Aorta (tissue), 5 donors: ENCODE measurements at regions of chr7 and their contacts with region 1.

Region 1: DNA sequence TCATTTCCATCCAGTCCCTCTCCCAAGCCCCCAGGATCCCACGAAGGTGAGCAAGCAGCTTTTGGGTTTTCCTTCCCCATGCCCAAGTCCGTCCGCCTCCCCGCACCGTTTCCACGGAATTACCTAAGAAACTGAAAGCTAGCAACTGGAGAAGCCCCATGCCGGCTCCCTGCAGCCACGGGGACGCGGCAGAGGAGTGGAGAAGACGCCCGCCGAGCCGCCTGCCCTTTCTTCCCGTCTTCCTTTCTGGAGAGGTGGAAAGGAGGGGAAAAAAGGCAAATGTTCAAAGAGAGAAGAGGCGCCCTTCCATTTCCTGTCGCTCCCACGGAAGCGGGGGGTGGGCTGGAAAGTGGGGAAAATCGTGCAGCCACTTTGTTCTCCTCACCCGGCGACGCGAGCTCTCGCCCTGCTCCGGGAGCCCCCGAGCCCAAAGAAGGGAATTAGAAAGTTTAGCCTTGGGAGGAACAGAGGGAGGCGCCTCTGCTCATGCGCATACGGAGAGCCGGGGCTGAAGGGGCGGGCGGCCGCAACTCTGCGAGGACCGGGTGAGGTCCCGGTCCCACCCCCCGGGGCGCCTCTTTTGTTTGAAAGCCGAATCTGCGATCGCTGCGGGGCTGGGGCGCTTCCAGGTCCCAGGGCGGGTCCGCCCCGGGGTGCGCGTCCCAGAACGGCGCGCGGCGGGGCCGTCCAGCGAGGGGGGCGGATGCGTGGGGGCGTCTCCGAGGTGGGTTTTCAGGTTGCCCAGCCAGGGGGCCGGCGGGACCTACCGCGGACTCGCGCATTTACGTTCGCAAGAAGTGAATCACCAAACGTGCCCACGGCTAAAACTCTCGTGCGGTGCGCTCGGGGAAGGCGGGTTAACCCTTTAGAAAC is at the start of gene LAMB1:
- DNase-seq: peak; percentile 77 to 89
- ATAC-seq: peak; percentile 75
- H3K4me3 ChIP-seq: peak within 1 kb of the TSS; percentile 54 to 81
- H3K27ac ChIP-seq: peak within 1 kb of the TSS in 1 of 2 donors; percentile 45
- H3K4me1 ChIP-seq: no peaks in the 10 kb centered on the region
- H3K27me3 ChIP-seq: no peaks in the 10 kb centered on the region
- total RNA-seq, gene LAMB1: 120 to 196 TPM

Region 2: GRCh38 chr7:107743567-107744344 is 259.2 kb before region 1 on chr7 and contains the start of gene CBLL1:
- intact Hi-C with region 1: no loop called
- DNase-seq: peak; percentile 98 to 99
- ATAC-seq: peak; percentile 100
- H3K4me3 ChIP-seq: peak within 1 kb of the TSS; percentile 57 to 81
- H3K27ac ChIP-seq: peak within 1 kb of the TSS; percentile 80 to 87
- H3K4me1 ChIP-seq: peaks cover 2 to 7% of the 10 kb centered on the region in 2 donors
- H3K27me3 ChIP-seq: no peaks in the 10 kb centered on the region
- total RNA-seq, gene CBLL1: 20.4 to 23.4 TPM

Region 3: DNA sequence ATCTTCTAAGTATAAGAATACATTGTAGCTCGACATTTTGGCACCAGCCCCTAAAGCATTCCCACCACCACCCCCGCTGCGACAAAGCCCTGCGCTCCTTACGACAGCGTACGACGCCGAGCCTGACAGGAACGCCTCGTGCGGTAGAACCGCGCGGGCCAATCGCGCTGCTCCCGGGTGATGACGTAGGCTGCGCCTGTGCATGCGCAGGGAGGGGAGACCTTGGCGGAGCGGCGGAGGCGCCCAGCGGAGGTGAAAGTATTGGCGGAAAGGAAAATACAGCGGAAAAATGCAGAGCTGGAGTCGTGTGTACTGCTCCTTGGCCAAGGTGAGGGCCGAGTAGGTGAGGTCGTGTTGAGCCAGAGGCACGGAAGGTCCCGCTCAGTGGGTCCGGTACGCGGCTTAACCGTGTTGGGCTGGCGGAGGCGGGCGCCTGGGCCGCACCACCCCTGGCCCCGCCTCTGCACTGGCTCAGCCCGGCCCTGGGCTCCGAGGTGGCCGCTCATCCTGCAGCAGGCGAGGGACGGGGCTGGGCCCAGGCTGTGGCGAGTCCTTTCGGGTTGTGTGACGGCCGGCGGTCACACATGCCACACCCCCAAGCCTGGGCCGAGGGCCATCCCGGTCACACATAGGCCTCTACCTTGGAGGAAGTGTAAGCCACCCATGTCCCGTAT is 111.9 kb before region 1 on chr7 and contains the start of gene DLD:
- intact Hi-C with region 1: loop called in 1 of 2 experiments (anchors 5 kb)
- DNase-seq: peak; percentile 97 to 99
- ATAC-seq: peak; percentile 100
- H3K4me3 ChIP-seq: peak within 1 kb of the TSS; percentile 51 to 80
- H3K27ac ChIP-seq: peak within 1 kb of the TSS; percentile 11 to 68
- H3K4me1 ChIP-seq: peaks cover 0 to 3% of the 10 kb centered on the region in 2 donors
- H3K27me3 ChIP-seq: no peaks in the 10 kb centered on the region
- total RNA-seq, gene DLD: 53.5 to 54.0 TPM

Region 4: DNA sequence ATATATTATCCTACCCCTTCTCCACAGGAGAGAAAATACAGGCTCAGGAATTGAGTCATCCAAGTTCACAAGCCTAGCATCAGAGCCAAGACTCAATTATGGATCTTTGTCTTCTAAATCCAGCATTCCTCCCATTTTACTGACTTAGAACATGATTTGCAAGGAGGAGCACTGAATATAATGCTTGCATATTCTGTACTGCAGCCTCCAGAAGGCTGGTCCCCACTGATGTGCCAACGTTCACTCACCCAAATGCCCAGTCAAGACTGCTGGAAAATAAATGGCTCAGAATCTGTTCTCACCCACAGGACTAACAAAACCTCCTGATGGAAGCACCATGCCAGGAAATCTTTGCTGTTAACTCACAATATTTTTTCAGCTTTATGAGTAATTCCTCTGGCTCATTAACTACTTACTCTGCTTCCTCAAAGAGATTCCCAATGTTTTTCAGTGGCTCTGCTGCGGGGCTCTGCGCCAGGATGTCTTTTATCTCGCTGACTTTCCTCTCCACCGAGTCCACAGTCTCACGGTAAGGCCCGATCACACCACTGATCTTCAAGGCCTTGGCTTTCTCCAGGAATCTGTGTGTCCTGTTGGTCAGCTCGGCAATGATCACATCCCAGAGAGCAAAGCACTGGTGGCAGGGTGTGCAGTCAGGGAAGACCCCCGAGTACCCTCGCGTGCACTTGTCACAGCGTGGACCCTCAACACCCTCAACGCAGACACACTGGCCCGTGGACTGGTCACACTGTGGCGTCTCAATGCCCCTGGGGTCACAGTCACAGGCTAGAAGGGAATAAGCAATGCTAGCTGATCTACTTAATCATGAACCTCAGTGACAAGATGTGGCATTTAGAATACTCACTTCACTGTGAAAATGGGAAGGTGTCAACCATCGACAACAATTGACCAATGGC is 63.1 kb before region 1 on chr7:
- intact Hi-C with region 1: loop called in 1 of 2 experiments (anchors 5 kb)
- DNase-seq: peak; percentile 78 to 84
- ATAC-seq: peak; percentile 79
- H3K4me3 ChIP-seq: no peak overlapping the region
- H3K27ac ChIP-seq: peak overlapping the region; percentile 37 to 62
- H3K4me1 ChIP-seq: peaks cover 4 to 6% of the 10 kb centered on the region in 2 donors
- H3K27me3 ChIP-seq: no peaks in the 10 kb centered on the region

Region 5: GRCh38 chr7:107958764-107959526 is 44.0 kb before region 1 on chr7:
- intact Hi-C with region 1: loop called in 1 of 2 experiments (anchors 5 kb)
- DNase-seq: no peak
- ATAC-seq: peak; percentile 82
- H3K4me3 ChIP-seq: no peak overlapping the region
- H3K27ac ChIP-seq: peak overlapping the region in 1 of 2 donors; percentile 16
- H3K4me1 ChIP-seq: peaks cover 0 to 6% of the 10 kb centered on the region in 2 donors
- H3K27me3 ChIP-seq: no peaks in the 10 kb centered on the region